ENCODE measurements at regions of chr6 and their contacts with region 1.

Region 1: GRCh38 chr6:134938896-134939295 is 11.0 kb downstream of the ALDH8A1 start:
- H3K4me3 ChIP-seq: no peak overlapping the region
- H3K27ac ChIP-seq: no peak overlapping the region
- H3K4me1 ChIP-seq: peaks cover 4% of the 10 kb centered on the region; the same call in 1 of the 2 replicates
- CTCF ChIP-seq: no peak

Region 2: DNA sequence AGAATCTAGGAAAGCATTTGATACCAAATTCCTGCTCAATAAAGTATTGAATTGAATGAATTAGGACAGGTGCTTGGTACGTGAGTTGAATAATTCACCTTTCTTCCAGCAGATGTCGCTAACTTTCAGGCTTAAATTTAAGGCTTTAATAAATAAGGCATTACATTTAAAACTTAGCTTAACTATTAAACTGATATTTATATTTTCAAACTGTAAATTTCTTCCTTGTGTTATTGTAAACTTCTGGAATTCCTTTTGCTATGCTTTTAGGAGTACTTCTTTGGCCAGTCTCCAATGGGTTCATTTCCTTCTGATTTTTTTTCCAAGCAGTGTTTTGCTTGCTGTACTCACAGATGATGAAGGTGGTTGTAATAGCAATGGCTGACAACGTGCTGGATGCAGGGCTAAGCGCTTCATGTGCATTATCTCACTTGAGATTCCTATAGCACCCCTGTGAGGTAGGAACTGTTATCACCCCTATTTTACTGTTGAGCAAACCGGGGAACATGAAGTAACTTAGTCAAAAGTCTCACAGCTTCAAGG is 815.2 kb before region 1 on chr6:
- CTCF ChIA-PET with region 1: interaction called, 30 read pairs
- POLR2A ChIA-PET with region 1: no interaction called
- H3K4me3 ChIP-seq: no peak overlapping the region
- H3K27ac ChIP-seq: no peak overlapping the region
- H3K4me1 ChIP-seq: no peaks in the 10 kb centered on the region
- CTCF ChIP-seq: peak; percentile 17

Region 3: DNA sequence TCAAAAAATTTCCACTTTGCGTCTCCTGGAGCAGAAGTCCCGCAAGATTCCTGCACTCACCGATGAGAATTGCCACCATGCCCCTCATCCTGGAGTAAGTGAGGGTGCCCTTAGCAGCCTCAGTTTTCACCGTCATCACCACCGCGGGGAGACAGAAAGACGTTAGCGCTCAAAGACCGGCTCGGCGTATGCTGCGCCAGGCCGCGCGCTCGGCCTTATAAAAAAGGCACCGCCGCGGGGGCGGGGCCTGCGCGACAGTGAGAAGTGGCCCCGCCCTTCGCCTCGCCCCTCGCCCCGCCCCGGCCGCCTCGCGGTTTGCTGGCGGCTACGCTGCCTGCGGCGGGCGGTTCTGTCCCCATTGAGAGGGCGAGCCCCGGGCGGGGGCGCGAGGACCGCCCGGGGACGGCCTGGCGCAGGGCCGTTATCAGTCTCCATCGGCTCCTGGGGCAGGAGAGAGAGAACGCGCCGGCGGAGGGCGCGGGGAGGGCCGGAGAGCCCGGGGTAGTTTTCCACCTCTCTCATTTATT is 764.2 kb before region 1 on chr6:
- CTCF ChIA-PET with region 1: interaction called, 11 read pairs
- POLR2A ChIA-PET with region 1: interaction called, 3 read pairs
- H3K4me3 ChIP-seq: peak overlapping the region; percentile 73
- H3K27ac ChIP-seq: peak overlapping the region; percentile 85
- H3K4me1 ChIP-seq: no peaks in the 10 kb centered on the region
- CTCF ChIP-seq: peak; percentile 2; the same call in 1 of the 2 replicates

Region 4: GRCh38 chr6:134846031-134846430 is 92.9 kb before region 1 on chr6:
- CTCF ChIA-PET with region 1: no interaction called
- POLR2A ChIA-PET with region 1: no interaction called
- H3K4me3 ChIP-seq: no peak overlapping the region
- H3K27ac ChIP-seq: no peak overlapping the region
- H3K4me1 ChIP-seq: no peaks in the 10 kb centered on the region
- CTCF ChIP-seq: no peak

Region 5: DNA sequence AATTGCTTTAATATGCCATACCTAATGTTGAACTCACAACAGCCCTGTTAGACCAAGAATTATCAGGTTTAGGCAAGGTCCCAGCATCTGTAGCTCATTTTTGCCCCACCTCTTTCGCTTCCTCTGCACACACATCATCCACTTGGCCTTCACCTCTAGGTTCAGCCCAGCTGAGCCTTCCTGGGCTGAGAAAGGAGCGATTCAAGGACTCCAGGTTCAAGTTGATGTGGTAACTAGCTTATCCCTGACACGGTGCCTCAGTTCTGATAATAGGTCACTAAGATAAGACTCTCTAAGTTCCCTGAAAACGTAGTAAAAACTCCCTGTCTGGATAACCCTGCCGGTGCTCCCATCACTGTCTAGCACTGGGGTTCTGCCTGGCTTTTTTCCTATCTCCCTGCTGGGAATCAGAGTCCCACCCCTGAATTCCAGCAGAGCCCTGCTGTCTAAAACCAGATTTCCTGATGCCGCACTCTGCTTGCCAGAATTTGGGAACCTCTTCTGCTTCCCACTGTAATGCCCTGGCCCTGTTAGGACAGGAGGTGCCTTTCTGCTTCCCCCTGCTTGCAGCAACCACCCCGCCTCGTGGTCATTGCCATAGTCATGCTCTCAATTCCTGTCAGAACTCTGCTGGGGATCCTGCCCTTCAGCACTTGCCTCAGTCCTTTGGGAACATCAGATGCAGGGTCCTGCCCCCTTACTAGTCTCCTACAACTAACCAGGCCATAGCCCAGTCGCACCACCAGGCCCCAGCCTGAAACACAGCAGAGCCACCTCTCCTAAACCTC is 36.6 kb before region 1 on chr6:
- CTCF ChIA-PET with region 1: interaction called, 17 read pairs
- POLR2A ChIA-PET with region 1: no interaction called
- H3K4me3 ChIP-seq: no peak overlapping the region
- H3K27ac ChIP-seq: no peak overlapping the region
- H3K4me1 ChIP-seq: no peaks in the 10 kb centered on the region
- CTCF ChIP-seq: no peak

Region 6: DNA sequence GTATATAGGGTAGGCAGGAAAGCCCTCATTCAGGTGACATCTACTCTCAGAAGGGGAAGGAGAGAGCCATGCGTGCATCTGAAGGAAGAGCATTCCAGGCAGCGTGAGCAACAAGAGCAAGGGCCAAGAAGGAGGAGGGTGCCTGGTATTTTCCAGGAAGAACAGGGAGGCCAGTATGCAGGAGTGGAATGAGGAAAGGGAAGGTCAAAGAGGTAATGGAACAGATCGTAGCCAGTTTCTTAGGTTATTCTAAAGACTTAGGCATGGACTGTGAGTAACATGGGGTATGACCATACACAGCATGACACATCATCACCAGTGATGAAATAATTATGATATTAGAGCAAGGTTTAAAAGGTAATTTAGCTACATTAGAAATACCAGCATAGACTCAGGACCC is 13.1 kb before region 1 on chr6:
- CTCF ChIA-PET with region 1: interaction called, 49 read pairs
- POLR2A ChIA-PET with region 1: no interaction called
- H3K4me3 ChIP-seq: no peak overlapping the region
- H3K27ac ChIP-seq: no peak overlapping the region
- H3K4me1 ChIP-seq: no peaks in the 10 kb centered on the region
- CTCF ChIP-seq: no peak